ENCODE measurements at regions of chr6 and their contacts with region 1.

Region 1: DNA sequence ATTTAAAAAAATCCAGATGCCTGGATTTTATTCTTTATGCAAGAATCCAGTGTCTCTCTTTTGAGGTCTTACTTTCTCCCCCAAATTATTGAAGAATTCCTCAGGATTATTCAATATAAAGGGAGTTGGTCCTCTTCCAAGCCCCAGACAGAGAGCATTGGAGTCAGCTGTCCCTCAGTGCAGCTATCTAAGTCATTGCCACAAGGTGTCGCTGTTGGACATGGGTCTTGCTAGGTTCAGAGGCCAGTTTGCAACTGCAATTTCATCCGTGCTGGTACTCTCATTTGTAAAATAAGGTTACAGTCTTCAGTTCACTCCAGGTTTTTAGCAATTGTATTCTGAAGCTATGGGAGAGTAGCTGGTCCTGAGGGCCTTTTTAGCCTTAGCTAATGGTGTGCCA is 27.8 kb downstream of the CCN2 start:
- DNase-seq: peak in 2 of 3 donors; percentile 26 to 70
- ATAC-seq: peak; percentile 93 to 96 (median 94)
- H3K4me3 ChIP-seq: no peak overlapping the region
- H3K27ac ChIP-seq: no peak overlapping the region
- H3K4me1 ChIP-seq: no peaks in the 10 kb centered on the region
- H3K27me3 ChIP-seq: no peaks in the 10 kb centered on the region
- CTCF ChIP-seq: peak; percentile 61 to 90 (median 76)
- POLR2A ChIP-seq: no peak

Region 2: DNA sequence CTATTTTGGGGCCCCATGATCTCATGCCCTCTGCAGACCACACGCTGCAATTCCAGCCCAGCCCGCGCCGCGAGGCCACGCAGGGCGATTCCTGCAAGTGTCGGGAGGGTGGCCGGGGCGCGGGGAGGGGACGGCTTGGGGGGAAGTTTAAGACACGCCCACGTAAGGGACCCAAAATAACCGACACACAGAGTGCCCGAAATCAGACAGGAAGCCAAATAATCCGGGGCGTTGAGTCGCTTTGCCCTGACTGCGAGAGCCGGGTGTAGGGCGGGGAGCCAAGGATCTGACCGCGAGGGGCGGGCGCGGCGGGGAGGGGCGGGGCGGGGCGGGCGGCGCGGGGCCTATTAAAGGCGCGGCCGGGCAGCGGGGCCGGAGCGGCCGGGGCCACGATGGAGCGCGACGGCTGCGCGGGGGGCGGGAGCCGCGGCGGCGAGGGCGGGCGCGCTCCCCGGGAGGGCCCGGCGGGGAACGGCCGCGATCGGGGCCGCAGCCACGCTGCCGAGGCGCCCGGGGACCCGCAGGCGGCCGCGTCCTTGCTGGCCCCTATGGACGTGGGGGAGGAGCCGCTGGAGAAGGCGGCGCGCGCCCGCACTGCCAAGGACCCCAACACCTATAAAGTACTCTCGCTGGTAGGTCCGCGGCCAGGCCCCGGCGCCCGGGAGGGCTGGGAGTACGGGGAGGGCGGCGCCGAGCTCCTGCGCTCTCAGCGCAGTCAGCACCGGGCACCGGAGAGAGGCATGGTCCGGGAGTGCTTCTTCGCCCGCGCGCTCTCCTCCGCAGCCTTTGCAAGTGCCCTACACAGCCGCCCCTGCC is 115.5 kb before region 1 on chr6 and contains the start of gene ENPP1:
- intact Hi-C with region 1: no loop called
- DNase-seq: peak; percentile 79 to 85 (median 81)
- ATAC-seq: peak; percentile 83 to 88 (median 86)
- H3K4me3 ChIP-seq: peak within 1 kb of the TSS; percentile 67 to 82 (median 73)
- H3K27ac ChIP-seq: peak within 1 kb of the TSS; percentile 66 to 80 (median 71)
- H3K4me1 ChIP-seq: peaks cover 0 to 7% (median 2%) of the 10 kb centered on the region in 4 donors
- H3K27me3 ChIP-seq: no peaks in the 10 kb centered on the region
- CTCF ChIP-seq: peak; percentile 22 to 38 (median 37)
- POLR2A ChIP-seq: peak; percentile 61
- total RNA-seq, gene ENPP1: 27.5 to 61.6 (median 45.6) TPM

Region 3: GRCh38 chr6:131877999-131878789 is 45.2 kb before region 1 on chr6:
- intact Hi-C with region 1: no loop called
- DNase-seq: no peak
- ATAC-seq: peak in 1 of 4 donors; percentile 67
- H3K4me3 ChIP-seq: no peak overlapping the region
- H3K27ac ChIP-seq: no peak overlapping the region
- H3K4me1 ChIP-seq: no peaks in the 10 kb centered on the region
- H3K27me3 ChIP-seq: no peaks in the 10 kb centered on the region
- CTCF ChIP-seq: no peak
- POLR2A ChIP-seq: no peak

Region 4: DNA sequence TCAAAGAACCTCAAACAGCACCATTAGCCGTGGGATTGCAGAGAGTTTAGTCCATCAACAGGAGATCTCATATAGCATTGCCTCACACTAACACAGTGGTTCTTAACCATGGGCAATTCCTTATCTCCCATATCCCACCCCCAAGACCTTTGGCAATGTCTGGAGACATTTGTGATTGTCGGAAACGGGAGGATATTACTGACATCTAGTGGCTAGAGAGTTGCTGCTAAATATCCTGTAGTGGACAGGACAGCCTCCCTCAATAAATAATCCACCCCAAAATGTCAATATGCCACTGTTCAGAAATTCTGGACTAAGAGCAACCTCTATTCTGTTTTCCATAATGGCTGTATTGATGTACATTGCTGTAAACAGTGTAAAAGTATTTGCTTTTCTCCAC is 237.9 kb after region 1 on chr6:
- intact Hi-C with region 1: loop called in 1 of 2 experiments (anchors 5 kb)
- DNase-seq: no peak
- ATAC-seq: peak; percentile 89 to 95 (median 92)
- H3K4me3 ChIP-seq: no peak overlapping the region
- H3K27ac ChIP-seq: no peak overlapping the region
- H3K4me1 ChIP-seq: no peaks in the 10 kb centered on the region
- H3K27me3 ChIP-seq: no peaks in the 10 kb centered on the region
- CTCF ChIP-seq: peak; percentile 73 to 83 (median 80)
- POLR2A ChIP-seq: no peak

Region 5: GRCh38 chr6:132227904-132228303 is 304.5 kb after region 1 on chr6:
- intact Hi-C with region 1: loop called (anchors 10 kb)
- DNase-seq: no peak
- ATAC-seq: no peak
- H3K4me3 ChIP-seq: no peak overlapping the region
- H3K27ac ChIP-seq: no peak overlapping the region
- H3K4me1 ChIP-seq: no peaks in the 10 kb centered on the region
- H3K27me3 ChIP-seq: no peaks in the 10 kb centered on the region
- CTCF ChIP-seq: no peak
- POLR2A ChIP-seq: no peak

Measured in right lobe of liver (tissue), 6 donors.